ENCODE measurements at regions of chr14 and their contacts with region 1.

Region 1: GRCh38 chr14:105375635-105376057 is 22.7 kb upstream of the TEX22 start:
- DNase-seq: peak; percentile 79 to 82 (median 81)
- H3K4me3 ChIP-seq: peak overlapping the region in 1 of 3 experiments; percentile 34
- H3K4me3 Mint-ChIP-seq: peak overlapping the region in 1 of 2 donors; percentile 55
- H3K27ac ChIP-seq: peak overlapping the region; percentile 1 to 72
- H3K27ac Mint-ChIP-seq: peak overlapping the region; percentile 80 to 90 (median 86)
- H3K4me1 ChIP-seq: peaks cover 16 to 25% of the 10 kb centered on the region in 2 donors
- H3K4me1 Mint-ChIP-seq: peaks cover 15% of the 10 kb centered on the region
- H3K27me3 ChIP-seq: no peaks in the 10 kb centered on the region
- H3K27me3 Mint-ChIP-seq: peaks cover 0 to 2% (median 2%) of the 10 kb centered on the region in 3 donors
- CTCF ChIP-seq: no peak

Region 2: GRCh38 chr14:105409364-105409763 is 33.7 kb after region 1 on chr14:
- intact Hi-C with region 1: loop called in 1 of 2 experiments (anchors 5 kb)
- DNase-seq: peak; percentile 32 to 40 (median 35)
- H3K4me3 ChIP-seq: no peak overlapping the region
- H3K4me3 Mint-ChIP-seq: peak overlapping the region in 1 of 2 donors; percentile 16
- H3K27ac ChIP-seq: peak overlapping the region in 1 of 2 donors; percentile 37
- H3K27ac Mint-ChIP-seq: peak overlapping the region in 5 of 7 donors; percentile 63 to 81 (median 73)
- H3K4me1 ChIP-seq: peaks cover 50 to 64% of the 10 kb centered on the region in 2 donors
- H3K4me1 Mint-ChIP-seq: peaks cover 50% of the 10 kb centered on the region
- H3K27me3 ChIP-seq: peaks cover 2 to 37% of the 10 kb centered on the region in 2 donors
- H3K27me3 Mint-ChIP-seq: peaks cover 29 to 41% (median 38%) of the 10 kb centered on the region in 3 donors
- CTCF ChIP-seq: no peak

Region 3: DNA sequence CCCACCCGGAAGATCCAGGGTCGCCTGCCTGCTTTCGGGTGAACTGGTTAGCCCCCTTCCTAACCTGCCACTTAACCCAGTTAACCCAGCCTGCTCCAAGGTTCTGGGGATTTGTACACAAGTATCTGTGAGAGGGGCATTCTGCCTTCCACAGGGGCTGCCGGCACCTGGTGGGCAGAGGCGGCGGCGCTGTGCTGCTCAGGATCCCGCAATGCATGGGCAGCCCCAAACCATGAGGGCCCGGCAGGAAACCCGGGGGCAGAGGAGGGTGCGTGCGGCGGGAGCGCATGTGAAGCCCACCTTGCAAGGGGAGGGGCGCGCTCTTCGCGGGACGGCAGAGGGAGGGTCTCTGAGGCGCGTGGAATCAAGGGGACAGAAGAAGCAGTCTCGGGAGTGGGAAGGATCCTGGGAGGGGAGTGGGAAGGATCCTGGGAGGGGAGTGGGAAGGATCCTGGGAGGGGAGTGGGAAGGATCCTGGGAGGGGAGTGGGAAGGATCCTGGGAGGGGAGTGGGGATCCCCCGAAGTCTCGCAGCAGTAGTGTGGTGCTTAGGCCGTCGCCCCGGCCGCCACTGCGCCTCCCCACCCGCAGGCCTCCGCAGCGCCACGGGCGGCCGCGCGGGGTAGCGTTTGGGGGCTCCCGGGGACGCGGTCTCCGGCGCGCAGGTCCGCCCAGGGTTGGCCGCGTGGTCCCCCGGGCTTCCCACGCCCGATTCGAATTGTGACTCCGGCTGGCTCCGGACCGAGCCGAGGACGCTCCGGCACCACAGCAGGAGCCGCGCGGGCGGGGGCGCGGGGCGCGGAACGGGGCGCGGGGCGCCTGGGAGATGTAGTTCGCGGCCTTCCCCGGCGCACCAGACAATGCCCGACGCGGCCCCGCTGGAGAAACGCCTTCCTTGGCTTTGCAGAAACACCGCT is 39.1 kb after region 1 on chr14:
- intact Hi-C with region 1: loop called (anchors 5 kb)
- DNase-seq: peak; percentile 34 to 57 (median 41)
- H3K4me3 ChIP-seq: peak overlapping the region; percentile 7 to 75 (median 25)
- H3K4me3 Mint-ChIP-seq: peak overlapping the region; percentile 49 to 79
- H3K27ac ChIP-seq: no peak overlapping the region
- H3K27ac Mint-ChIP-seq: peak overlapping the region in 3 of 7 donors; percentile 18 to 57 (median 33)
- H3K4me1 ChIP-seq: peaks cover 33 to 46% of the 10 kb centered on the region in 2 donors
- H3K4me1 Mint-ChIP-seq: peaks cover 32% of the 10 kb centered on the region
- H3K27me3 ChIP-seq: peaks cover 4 to 46% of the 10 kb centered on the region in 2 donors
- H3K27me3 Mint-ChIP-seq: peaks cover 41 to 56% (median 56%) of the 10 kb centered on the region in 3 donors
- CTCF ChIP-seq: peak; percentile 98

Region 4: GRCh38 chr14:105448706-105449111 is 73.1 kb after region 1 on chr14:
- intact Hi-C with region 1: loop called in 1 of 2 experiments (anchors 1 kb)
- DNase-seq: peak; percentile 35 to 53 (median 51)
- H3K4me3 ChIP-seq: no peak overlapping the region
- H3K4me3 Mint-ChIP-seq: no peak overlapping the region
- H3K27ac ChIP-seq: no peak overlapping the region
- H3K27ac Mint-ChIP-seq: peak overlapping the region in 1 of 7 donors; percentile 11
- H3K4me1 ChIP-seq: no peaks in the 10 kb centered on the region
- H3K4me1 Mint-ChIP-seq: no peaks in the 10 kb centered on the region
- H3K27me3 ChIP-seq: no peaks in the 10 kb centered on the region
- H3K27me3 Mint-ChIP-seq: no peaks in the 10 kb centered on the region
- CTCF ChIP-seq: peak; percentile 84

Measured in CD14-positive monocyte (primary cell).